ENCODE measurements at regions of chr17 and their contacts with region 1.

Region 1: DNA sequence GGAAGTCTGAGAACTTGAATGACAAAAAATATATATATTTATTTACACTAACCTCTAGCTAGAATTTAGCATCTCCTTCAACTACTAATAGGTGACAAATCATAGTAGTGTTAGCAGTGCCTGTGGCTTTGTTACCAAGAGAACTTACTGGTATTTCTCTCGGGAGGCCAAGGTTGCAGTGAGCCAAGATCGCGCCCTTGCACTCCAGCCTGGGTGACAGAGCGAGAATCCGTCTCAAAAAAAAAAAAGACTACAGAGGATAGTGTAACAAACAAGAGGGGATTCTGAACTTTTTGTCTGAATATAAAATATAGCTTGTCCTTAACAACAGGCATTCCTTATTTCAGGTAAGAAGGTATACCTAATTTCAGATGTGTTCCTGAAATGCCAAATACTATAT is 1.3 kb upstream of the SUZ12 start:
- DNase-seq: no peak
- H3K4me3 Mint-ChIP-seq: no peak overlapping the region
- H3K27ac Mint-ChIP-seq: no peak overlapping the region
- H3K4me1 Mint-ChIP-seq: peaks cover 17% of the 10 kb centered on the region
- H3K27me3 Mint-ChIP-seq: no peaks in the 10 kb centered on the region

Region 2: GRCh38 chr17:31900877-31901276 is 34.6 kb before region 1 on chr17:
- CTCF ChIA-PET with region 1: interaction called, 7 read pairs
- POLR2A ChIA-PET with region 1: interaction called, 12 read pairs
- DNase-seq: no peak
- H3K4me3 Mint-ChIP-seq: no peak overlapping the region
- H3K27ac Mint-ChIP-seq: no peak overlapping the region
- H3K4me1 Mint-ChIP-seq: peaks cover 26% of the 10 kb centered on the region
- H3K27me3 Mint-ChIP-seq: no peaks in the 10 kb centered on the region

Measured in activated CD4-positive, alpha-beta memory T cell treated with anti-CD3 and anti-CD28 coated beads, Interleukin-2, amount 10 ng/mL, durations not matched to agents 7 days and 5 days (primary cell).